ENCODE measurements at regions of chr1 and their contacts with region 1.

Region 1: DNA sequence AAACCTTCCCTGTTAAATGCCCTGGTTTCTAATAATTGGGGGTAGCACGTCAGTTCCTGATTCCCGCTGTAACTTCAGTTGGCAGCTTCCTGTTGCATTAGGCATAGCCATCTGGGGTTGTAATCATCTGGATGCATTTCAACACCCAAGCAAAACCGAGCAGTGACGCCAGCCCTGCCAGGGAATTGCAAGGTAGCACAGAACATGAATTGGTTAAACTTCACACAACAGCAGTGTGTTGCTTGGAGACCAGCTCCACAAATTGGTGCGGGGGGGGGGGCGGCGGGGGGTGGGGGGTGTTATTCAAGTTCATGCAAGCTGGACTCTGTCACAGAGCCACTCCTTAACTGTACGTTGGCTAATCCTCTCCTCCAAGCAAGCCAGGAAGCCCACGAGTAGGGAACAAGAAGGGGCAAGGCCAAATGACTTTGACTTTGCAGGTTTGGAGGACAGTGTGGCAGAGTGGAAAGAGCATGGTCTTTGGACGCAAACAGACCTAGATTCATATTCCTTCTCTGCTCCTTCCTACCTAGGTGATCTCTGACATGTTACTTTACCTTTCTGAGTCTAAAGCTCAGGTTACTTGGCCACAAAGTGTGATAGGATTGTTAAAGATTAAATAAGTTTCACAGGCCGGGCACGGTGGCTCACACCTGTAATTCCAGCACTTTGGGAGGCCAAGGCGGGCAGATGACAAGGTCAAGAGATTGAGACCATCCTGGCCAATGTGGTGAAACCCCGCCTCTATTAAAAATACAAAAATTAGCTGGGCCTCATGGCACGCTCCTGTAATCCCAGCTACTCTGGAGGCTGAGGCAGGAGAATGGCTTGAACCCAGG is 4.7 kb downstream of the LAX1 start:
- DNase-seq: peak in 1 of 9 experiments; percentile 51
- ATAC-seq: no peak
- H3K4me3 ChIP-seq: no peak overlapping the region
- H3K4me3 Mint-ChIP-seq: no peak overlapping the region
- H3K27ac ChIP-seq: peak overlapping the region in 1 of 2 experiments; percentile 50
- H3K27ac Mint-ChIP-seq: peak overlapping the region; percentile 83
- H3K4me1 ChIP-seq: peaks cover 21% of the 10 kb centered on the region
- H3K4me1 Mint-ChIP-seq: peaks cover 50% of the 10 kb centered on the region
- H3K27me3 ChIP-seq: no peaks in the 10 kb centered on the region
- H3K27me3 Mint-ChIP-seq: no peaks in the 10 kb centered on the region
- CTCF ChIP-seq: no peak

Region 2: DNA sequence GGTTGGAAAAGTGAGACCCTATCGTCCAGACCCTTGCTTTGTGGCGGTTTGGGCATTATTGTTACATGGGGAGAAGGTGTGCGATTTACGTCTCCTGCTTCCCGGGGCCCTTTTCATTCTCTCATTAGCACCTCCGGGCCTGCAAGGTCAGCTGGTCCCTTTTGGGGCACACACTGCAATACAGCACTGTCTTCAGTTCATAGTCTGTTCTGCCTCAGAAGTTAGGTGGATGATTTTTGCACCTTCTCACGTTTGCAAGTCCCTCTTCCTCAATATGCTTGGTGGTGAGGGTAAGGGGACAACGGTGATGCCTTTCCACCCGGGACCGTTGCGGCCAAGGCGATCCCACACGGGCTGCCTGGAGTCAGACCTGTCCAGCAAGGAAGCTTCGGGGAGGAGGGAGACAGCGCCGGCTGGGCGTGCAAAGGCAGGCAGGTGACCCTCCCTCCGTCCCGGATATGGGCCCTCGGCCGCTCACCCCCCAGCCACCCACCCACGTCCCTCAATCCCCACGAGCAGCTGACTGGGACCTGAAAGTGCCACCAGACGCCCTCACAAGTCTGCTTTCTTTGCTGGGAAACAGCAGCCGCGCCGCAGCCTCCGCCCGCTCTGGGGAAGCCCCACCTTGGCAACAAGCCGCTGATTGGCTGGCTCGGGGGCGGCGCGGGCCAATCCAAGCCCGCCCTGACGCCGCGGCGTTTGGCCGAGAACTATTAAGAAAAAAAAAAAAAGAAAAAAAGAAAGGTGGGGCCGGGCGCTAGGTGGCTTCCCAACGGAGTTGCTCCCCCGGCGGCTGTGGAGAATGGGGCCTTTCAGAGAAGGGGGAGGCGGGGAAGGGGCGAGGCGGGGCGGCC is 442.7 kb before region 1 on chr1:
- CTCF ChIA-PET with region 1: interaction called, 3 read pairs
- POLR2A ChIA-PET with region 1: interaction called, 4 read pairs
- intact Hi-C with region 1: loop called in 1 of 2 experiments (anchors 5 kb)
- DNase-seq: peak; percentile 86 to 97 (median 94)
- ATAC-seq: peak; percentile 67
- H3K4me3 ChIP-seq: peak overlapping the region; percentile 58 to 60
- H3K4me3 Mint-ChIP-seq: peak overlapping the region; percentile 74
- H3K27ac ChIP-seq: peak overlapping the region; percentile 92 to 97
- H3K27ac Mint-ChIP-seq: peak overlapping the region; percentile 93
- H3K4me1 ChIP-seq: peaks cover 65% of the 10 kb centered on the region
- H3K4me1 Mint-ChIP-seq: peaks cover 65% of the 10 kb centered on the region
- H3K27me3 ChIP-seq: no peaks in the 10 kb centered on the region
- H3K27me3 Mint-ChIP-seq: no peaks in the 10 kb centered on the region
- CTCF ChIP-seq: no peak

Region 3: DNA sequence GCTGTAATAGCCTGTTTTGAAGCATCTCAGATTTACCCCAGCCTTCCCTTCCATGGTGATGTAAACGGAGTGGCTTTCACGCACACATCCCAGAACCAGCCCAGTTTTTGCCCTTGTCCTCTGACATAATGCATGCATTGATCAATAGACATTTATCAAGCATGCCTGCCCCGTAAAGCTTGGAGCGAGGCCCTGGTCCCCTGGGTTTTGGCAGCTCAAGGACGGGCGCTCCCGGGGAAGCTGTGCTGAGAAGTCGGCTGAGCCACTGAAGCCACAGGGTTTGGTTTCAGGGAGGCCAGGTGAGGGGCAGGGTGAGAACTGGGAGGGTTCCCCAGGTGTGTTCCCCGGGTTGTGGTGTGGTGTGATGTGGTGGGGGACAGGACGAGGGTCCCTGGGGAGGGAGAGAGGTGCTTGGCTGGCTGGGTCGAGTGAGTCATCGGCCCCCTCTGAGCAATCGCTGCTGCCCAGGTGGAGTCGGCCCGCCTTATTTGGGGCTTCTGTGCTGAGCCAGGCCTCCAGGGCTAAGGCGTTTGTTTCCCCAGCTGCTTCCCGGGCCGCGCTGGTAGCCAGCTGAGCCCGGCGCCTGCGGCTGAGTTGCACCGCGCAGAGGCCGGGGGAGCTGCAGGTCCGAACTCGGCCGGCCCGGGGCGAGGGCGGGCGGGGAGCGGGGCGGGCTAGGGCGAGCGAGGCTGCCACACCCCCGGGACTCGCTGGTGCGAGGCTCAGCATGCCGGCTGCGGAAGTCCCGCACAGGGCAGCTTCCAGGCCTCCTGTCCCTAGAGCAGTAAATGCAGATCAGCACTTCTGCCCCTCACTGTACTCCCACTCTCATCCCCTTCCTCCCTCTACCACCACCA is 119.5 kb before region 1 on chr1:
- CTCF ChIA-PET with region 1: interaction called, 3 read pairs
- POLR2A ChIA-PET with region 1: interaction called, 10 read pairs
- intact Hi-C with region 1: no loop called
- DNase-seq: peak; percentile 35 to 86 (median 81)
- ATAC-seq: peak; percentile 69
- H3K4me3 ChIP-seq: peak overlapping the region; percentile 37
- H3K4me3 Mint-ChIP-seq: peak overlapping the region; percentile 79
- H3K27ac ChIP-seq: peak overlapping the region; percentile 12 to 77
- H3K27ac Mint-ChIP-seq: peak overlapping the region; percentile 94
- H3K4me1 ChIP-seq: peaks cover 53% of the 10 kb centered on the region
- H3K4me1 Mint-ChIP-seq: peaks cover 63% of the 10 kb centered on the region
- H3K27me3 ChIP-seq: no peaks in the 10 kb centered on the region
- H3K27me3 Mint-ChIP-seq: no peaks in the 10 kb centered on the region
- CTCF ChIP-seq: no peak

Region 4: DNA sequence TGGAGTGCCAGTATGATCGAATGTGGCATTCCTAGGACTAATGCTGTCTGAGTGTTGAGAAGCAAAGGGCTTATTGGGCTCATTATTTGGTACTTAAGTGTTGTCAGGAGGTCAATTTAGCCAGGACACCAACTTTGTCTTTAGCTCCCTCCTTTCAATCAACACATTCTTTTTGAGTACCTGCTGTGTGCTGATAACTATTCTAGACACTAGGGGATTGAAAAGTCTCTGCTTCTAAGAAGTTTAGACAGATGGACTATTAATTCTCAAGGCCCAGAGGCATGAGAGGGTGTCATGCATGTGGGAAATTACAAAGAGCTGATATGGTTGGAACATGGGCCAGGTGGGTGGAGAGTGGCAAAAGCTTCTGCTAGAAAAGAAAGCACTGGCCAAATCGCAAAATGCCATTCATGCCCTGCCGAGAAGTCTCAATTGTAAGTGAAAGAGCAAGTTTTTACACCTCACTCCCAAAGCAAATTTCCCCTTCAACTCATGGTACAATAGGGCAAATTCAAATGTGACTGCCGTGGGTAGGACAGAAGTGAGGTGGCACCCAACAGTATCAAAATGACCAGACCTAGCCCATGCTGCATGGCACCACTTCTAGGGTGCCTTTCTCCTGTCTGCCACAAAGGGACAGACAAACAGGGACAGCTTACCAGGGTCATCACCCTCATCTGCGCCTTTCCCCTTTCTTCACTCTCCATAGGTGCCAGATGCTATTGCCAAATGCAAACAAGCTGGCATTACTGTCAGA is 58.3 kb before region 1 on chr1:
- CTCF ChIA-PET with region 1: no interaction called
- POLR2A ChIA-PET with region 1: no interaction called
- intact Hi-C with region 1: loop called in 1 of 2 experiments (anchors 10 kb)
- DNase-seq: no peak
- ATAC-seq: no peak
- H3K4me3 ChIP-seq: no peak overlapping the region
- H3K4me3 Mint-ChIP-seq: no peak overlapping the region
- H3K27ac ChIP-seq: no peak overlapping the region
- H3K27ac Mint-ChIP-seq: peak overlapping the region; percentile 45
- H3K4me1 ChIP-seq: no peaks in the 10 kb centered on the region
- H3K4me1 Mint-ChIP-seq: no peaks in the 10 kb centered on the region
- H3K27me3 ChIP-seq: no peaks in the 10 kb centered on the region
- H3K27me3 Mint-ChIP-seq: no peaks in the 10 kb centered on the region
- CTCF ChIP-seq: no peak

Region 5: GRCh38 chr1:203733009-203733863 is 36.5 kb before region 1 on chr1:
- CTCF ChIA-PET with region 1: no interaction called
- POLR2A ChIA-PET with region 1: interaction called, 4 read pairs
- intact Hi-C with region 1: loop called (anchors 5 to 10 kb)
- DNase-seq: no peak
- ATAC-seq: no peak
- H3K4me3 ChIP-seq: no peak overlapping the region
- H3K4me3 Mint-ChIP-seq: no peak overlapping the region
- H3K27ac ChIP-seq: no peak overlapping the region
- H3K27ac Mint-ChIP-seq: no peak overlapping the region
- H3K4me1 ChIP-seq: no peaks in the 10 kb centered on the region
- H3K4me1 Mint-ChIP-seq: no peaks in the 10 kb centered on the region
- H3K27me3 ChIP-seq: no peaks in the 10 kb centered on the region
- H3K27me3 Mint-ChIP-seq: no peaks in the 10 kb centered on the region
- CTCF ChIP-seq: no peak

Region 6: GRCh38 chr1:203754455-203754864 is 15.3 kb before region 1 on chr1:
- CTCF ChIA-PET with region 1: no interaction called
- POLR2A ChIA-PET with region 1: interaction called, 15 read pairs
- intact Hi-C with region 1: loop called in 1 of 2 experiments (anchors 1 kb)
- DNase-seq: peak in 4 of 9 experiments; percentile 18 to 56 (median 31)
- ATAC-seq: peak; percentile 52
- H3K4me3 ChIP-seq: peak overlapping the region in 1 of 2 experiments; percentile 16
- H3K4me3 Mint-ChIP-seq: peak overlapping the region; percentile 42
- H3K27ac ChIP-seq: peak overlapping the region in 1 of 2 experiments; percentile 28
- H3K27ac Mint-ChIP-seq: peak overlapping the region; percentile 88
- H3K4me1 ChIP-seq: peaks cover 23% of the 10 kb centered on the region
- H3K4me1 Mint-ChIP-seq: peaks cover 35% of the 10 kb centered on the region
- H3K27me3 ChIP-seq: no peaks in the 10 kb centered on the region
- H3K27me3 Mint-ChIP-seq: no peaks in the 10 kb centered on the region
- CTCF ChIP-seq: no peak